GM12878 (cell line): ENCODE measurements at regions of chr5 and their contacts with region 1.

Region 1: GRCh38 chr5:159133041-159133741 is 33.5 kb upstream of the EBF1 start:
- DNase-seq: peak; percentile 28
- ATAC-seq: peak; percentile 89
- H3K4me3 ChIP-seq: no peak overlapping the region
- H3K27ac ChIP-seq: no peak overlapping the region
- H3K4me1 ChIP-seq: no peaks in the 10 kb centered on the region
- H3K27me3 ChIP-seq: 0 out of 4 replicates have a peak, but pooled peaks cover 0 to 4% of the 10 kb centered on the region in 2 experiments
- CTCF ChIP-seq: peak; percentile 64 to 83 (median 73)
- EP300 ChIP-seq: no peak; a peak in 1 of 4 replicates
- POLR2A ChIP-seq: no peak
- RAD21 ChIP-seq: peak; percentile 88

Region 2: GRCh38 chr5:157820593-157821252 is 1312.5 kb before region 1 on chr5:
- CTCF ChIA-PET with region 1: interaction called, 11 read pairs
- POLR2A ChIA-PET with region 1: no interaction called
- RAD21 ChIA-PET with region 1: interaction called, 3 read pairs
- SMC1A ChIA-PET with region 1: interaction called, 9 read pairs
- in situ Hi-C with region 1: no loop called
- intact Hi-C with region 1: no loop called
- DNase-seq: no peak
- ATAC-seq: peak; percentile 69
- H3K4me3 ChIP-seq: no peak overlapping the region
- H3K27ac ChIP-seq: no peak overlapping the region
- H3K4me1 ChIP-seq: no peaks in the 10 kb centered on the region
- H3K27me3 ChIP-seq: no peaks in the 10 kb centered on the region
- CTCF ChIP-seq: peak; percentile 39 to 56 (median 49); a peak in 5 of 6 replicates
- EP300 ChIP-seq: no peak
- POLR2A ChIP-seq: no peak
- RAD21 ChIP-seq: peak; percentile 63

Region 3: DNA sequence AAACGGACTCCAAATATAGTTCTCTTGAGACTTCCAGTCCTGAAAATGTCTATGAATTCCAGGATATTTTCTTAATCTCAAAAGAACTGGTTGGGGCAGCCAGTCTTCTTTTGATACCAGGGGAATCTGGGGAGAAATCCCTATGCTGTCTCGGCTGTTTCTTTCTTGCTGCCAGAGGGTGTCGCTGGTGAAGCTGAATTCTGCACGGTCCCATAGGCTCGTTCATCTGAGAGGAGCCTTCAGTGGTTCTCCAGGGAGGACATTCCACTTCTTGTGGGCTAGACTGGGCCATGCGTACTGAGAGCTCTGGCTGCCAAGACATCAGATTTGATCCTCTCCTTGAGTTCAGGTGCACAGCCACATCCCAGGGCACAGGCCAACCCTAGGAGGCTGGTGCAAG is 1119.3 kb before region 1 on chr5:
- CTCF ChIA-PET with region 1: no interaction called
- POLR2A ChIA-PET with region 1: no interaction called
- RAD21 ChIA-PET with region 1: no interaction called
- SMC1A ChIA-PET with region 1: no interaction called
- in situ Hi-C with region 1: no loop called
- intact Hi-C with region 1: loop called (anchors 10 kb)
- DNase-seq: no peak
- ATAC-seq: peak; percentile 56
- H3K4me3 ChIP-seq: no peak overlapping the region
- H3K27ac ChIP-seq: no peak overlapping the region
- H3K4me1 ChIP-seq: no peaks in the 10 kb centered on the region
- H3K27me3 ChIP-seq: peaks cover 0 to 2% of the 10 kb centered on the region in 2 experiments; a peak in 2 of 4 replicates
- CTCF ChIP-seq: peak; percentile 29 to 41 (median 35); a peak in 3 of 6 replicates
- EP300 ChIP-seq: no peak
- POLR2A ChIP-seq: no peak
- RAD21 ChIP-seq: no peak

Region 4: DNA sequence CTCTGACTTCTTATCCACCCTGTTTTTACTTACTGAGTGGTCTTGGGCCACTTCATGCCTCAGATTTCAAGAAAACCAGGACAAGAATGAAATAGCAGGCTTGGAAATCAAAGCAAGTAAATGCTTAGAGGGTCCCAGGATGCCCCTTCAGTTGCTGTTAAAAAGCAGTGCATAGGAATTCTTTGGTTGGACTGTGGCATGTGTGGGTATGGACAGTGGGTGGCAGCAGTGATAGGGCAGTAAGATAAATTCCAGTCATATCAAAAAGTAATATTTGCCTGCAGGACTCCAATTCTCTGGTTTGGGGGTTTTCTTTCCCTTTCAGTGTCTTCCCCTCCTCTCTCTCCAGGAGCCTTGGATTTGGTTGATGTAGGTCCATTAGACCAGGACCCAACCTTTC is 967.6 kb before region 1 on chr5:
- CTCF ChIA-PET with region 1: interaction called, 19 read pairs
- POLR2A ChIA-PET with region 1: no interaction called
- RAD21 ChIA-PET with region 1: interaction called, 6 read pairs
- SMC1A ChIA-PET with region 1: interaction called, 7 read pairs
- in situ Hi-C with region 1: loop called (anchors 10 kb)
- intact Hi-C with region 1: no loop called
- DNase-seq: no peak
- ATAC-seq: no peak
- H3K4me3 ChIP-seq: no peak overlapping the region
- H3K27ac ChIP-seq: no peak overlapping the region
- H3K4me1 ChIP-seq: no peaks in the 10 kb centered on the region
- H3K27me3 ChIP-seq: peaks cover 2% of the 10 kb centered on the region in 2 experiments; a peak in 2 of 4 replicates
- CTCF ChIP-seq: peak in 2 of 3 experiments; percentile 8 to 14; a peak in 1 of 6 replicates
- EP300 ChIP-seq: no peak
- POLR2A ChIP-seq: no peak
- RAD21 ChIP-seq: no peak

Region 5: DNA sequence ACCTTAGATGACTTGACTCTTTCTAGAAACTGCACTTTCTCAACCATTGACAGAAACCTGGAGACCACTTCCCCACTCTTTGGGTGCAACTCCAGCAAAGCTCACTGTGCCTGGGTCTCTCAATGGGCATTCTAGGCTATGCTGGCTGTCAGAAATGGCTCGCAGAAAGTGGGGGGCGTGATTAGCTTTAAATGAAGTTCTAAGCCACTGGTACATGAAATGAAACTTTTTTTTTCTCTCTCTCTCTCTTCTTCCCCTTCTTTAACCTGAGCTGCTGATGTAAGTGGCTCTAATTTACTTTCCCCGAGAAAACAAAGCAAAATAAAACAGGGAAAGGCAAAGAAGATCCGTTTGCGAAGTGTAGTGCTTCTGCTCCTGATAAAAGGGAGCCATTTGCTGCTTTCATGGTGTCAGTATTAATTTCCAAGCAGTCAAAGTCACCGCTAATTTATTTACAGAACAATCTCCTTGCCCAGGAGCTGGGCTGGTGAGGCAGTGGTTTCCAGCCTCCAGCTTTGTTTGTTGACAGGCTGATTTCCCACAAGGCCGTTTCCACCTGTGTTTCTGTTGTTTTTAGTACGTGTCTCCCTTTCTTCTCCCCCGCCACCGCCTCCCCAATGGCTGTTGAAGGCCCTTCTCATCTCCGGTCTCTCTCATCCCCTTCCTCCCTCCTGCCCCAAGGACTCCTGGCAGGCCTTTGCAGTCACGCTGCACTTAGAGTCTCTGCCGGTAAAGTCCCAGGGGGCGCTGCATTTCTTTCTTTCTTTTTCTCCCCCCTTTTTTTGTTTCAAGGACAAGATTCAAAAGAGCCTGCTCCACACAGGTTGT is 456.3 kb before region 1 on chr5:
- CTCF ChIA-PET with region 1: interaction called, 16 read pairs
- POLR2A ChIA-PET with region 1: no interaction called
- RAD21 ChIA-PET with region 1: interaction called, 4 read pairs
- SMC1A ChIA-PET with region 1: interaction called, 8 read pairs
- in situ Hi-C with region 1: no loop called
- intact Hi-C with region 1: no loop called
- DNase-seq: no peak
- ATAC-seq: peak; percentile 83
- H3K4me3 ChIP-seq: no peak overlapping the region
- H3K27ac ChIP-seq: no peak overlapping the region
- H3K4me1 ChIP-seq: peaks cover 3% of the 10 kb centered on the region; the same call in 1 of the 2 replicates
- H3K27me3 ChIP-seq: no peaks in the 10 kb centered on the region; a peak in 1 of 4 replicates
- CTCF ChIP-seq: peak; percentile 19 to 37 (median 31); a peak in 4 of 6 replicates
- EP300 ChIP-seq: no peak
- POLR2A ChIP-seq: no peak
- RAD21 ChIP-seq: 0 out of 2 replicates have a peak, but pooled peaks have one; percentile 25